K562 (cell line): ENCODE measurements at regions of chr22 and their contacts with region 1.

Region 1: GRCh38 chr22:22463855-22464540 is 44.5 kb downstream of the ZNF280B start:
- DNase-seq: peak; percentile 97 to 99 (median 99)
- ATAC-seq: peak; percentile 97
- H3K4me3 ChIP-seq: no peak overlapping the region
- H3K27ac ChIP-seq: no peak overlapping the region
- H3K4me1 ChIP-seq: peaks cover 0 to 2% of the 10 kb centered on the region in 2 experiments; a peak in 1 of 5 replicates
- H3K27me3 ChIP-seq: peaks cover 13 to 18% of the 10 kb centered on the region in 2 experiments; a peak in 4 of 5 replicates
- CTCF ChIP-seq: peak in 2 of 3 experiments; percentile 100; a peak in 4 of 6 replicates
- EP300 ChIP-seq: no peak; the same call in 1 of the 2 replicates
- POLR2A ChIP-seq: no peak
- RAD21 ChIP-seq: peak in 1 of 2 experiments; percentile 100; a peak in 2 of 4 replicates

Region 2: DNA sequence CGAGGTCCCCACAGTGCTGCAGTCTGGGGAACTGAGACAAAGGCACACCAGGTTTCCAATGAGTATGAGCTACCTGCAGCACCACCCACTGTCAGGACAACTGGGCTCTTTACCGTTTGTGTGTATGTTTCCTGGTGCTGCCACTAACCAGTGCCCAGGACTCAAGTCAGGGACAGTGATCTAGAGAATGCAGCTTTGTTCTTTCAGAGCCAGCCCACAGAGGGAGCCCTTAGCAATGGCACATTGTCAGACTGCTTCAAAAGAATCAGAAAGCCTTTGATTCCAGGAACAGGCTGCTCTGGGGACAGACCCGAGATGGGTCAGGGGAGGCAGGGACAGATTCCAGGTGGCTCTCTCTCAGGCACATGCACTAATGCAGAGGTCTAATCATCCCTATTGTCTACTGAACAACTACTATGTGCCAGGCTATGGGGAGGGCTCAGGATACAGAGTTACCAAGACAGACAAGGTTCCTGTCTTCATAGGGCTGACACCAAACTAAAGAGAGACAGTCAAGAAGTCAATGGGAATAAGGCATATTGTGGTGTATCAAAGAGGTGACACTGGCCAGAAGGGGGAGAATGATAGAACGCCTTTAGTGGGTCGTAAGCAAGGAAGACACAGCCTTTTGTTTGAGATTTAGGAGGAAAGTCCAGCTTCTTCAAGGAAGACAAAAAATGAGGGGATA is 115.7 kb before region 1 on chr22:
- CTCF ChIA-PET with region 1: no interaction called
- POLR2A ChIA-PET with region 1: no interaction called
- in situ Hi-C with region 1: no loop called
- intact Hi-C with region 1: no loop called
- DNase-seq: peak in 1 of 4 experiments; percentile 55
- ATAC-seq: peak; percentile 73
- H3K4me3 ChIP-seq: no peak overlapping the region
- H3K27ac ChIP-seq: no peak overlapping the region
- H3K4me1 ChIP-seq: no peaks in the 10 kb centered on the region
- H3K27me3 ChIP-seq: peaks cover 22 to 34% of the 10 kb centered on the region in 2 experiments
- CTCF ChIP-seq: peak in 2 of 3 experiments; percentile 68 to 75; a peak in 4 of 6 replicates
- EP300 ChIP-seq: no peak
- POLR2A ChIP-seq: no peak
- RAD21 ChIP-seq: no peak

Region 3: GRCh38 chr22:22380098-22381030 is 83.6 kb before region 1 on chr22:
- CTCF ChIA-PET with region 1: no interaction called
- POLR2A ChIA-PET with region 1: no interaction called
- in situ Hi-C with region 1: no loop called
- intact Hi-C with region 1: loop called (anchors 1 kb)
- DNase-seq: peak; percentile 80 to 91 (median 88)
- ATAC-seq: peak; percentile 87
- H3K4me3 ChIP-seq: no peak overlapping the region
- H3K27ac ChIP-seq: no peak overlapping the region
- H3K4me1 ChIP-seq: no peaks in the 10 kb centered on the region
- H3K27me3 ChIP-seq: peaks cover 14 to 33% of the 10 kb centered on the region in 2 experiments
- CTCF ChIP-seq: peak; percentile 78 to 87 (median 83)
- EP300 ChIP-seq: no peak
- POLR2A ChIP-seq: no peak
- RAD21 ChIP-seq: peak in 1 of 2 experiments; percentile 22; a peak in 1 of 4 replicates

Region 4: GRCh38 chr22:22479999-22480532 is 16.1 kb after region 1 on chr22:
- CTCF ChIA-PET with region 1: interaction called, 3 read pairs
- POLR2A ChIA-PET with region 1: interaction called, 13 read pairs
- in situ Hi-C with region 1: no loop called
- intact Hi-C with region 1: no loop called
- DNase-seq: peak in 2 of 4 experiments; percentile 14 to 33
- ATAC-seq: peak; percentile 52
- H3K4me3 ChIP-seq: no peak overlapping the region
- H3K27ac ChIP-seq: no peak overlapping the region
- H3K4me1 ChIP-seq: peaks cover 0 to 7% of the 10 kb centered on the region in 2 experiments; a peak in 2 of 5 replicates
- H3K27me3 ChIP-seq: no peaks in the 10 kb centered on the region; a peak in 1 of 5 replicates
- CTCF ChIP-seq: no peak
- EP300 ChIP-seq: no peak
- POLR2A ChIP-seq: no peak
- RAD21 ChIP-seq: no peak

Region 5: GRCh38 chr22:22576244-22576988 is 112.4 kb after region 1 on chr22:
- CTCF ChIA-PET with region 1: interaction called, 58 read pairs
- POLR2A ChIA-PET with region 1: interaction called, 6 read pairs
- in situ Hi-C with region 1: no loop called
- intact Hi-C with region 1: loop called (anchors 2 kb)
- DNase-seq: peak; percentile 96 to 98 (median 97)
- ATAC-seq: peak; percentile 96
- H3K4me3 ChIP-seq: no peak overlapping the region
- H3K27ac ChIP-seq: no peak overlapping the region
- H3K4me1 ChIP-seq: peaks cover 0 to 14% of the 10 kb centered on the region in 2 experiments; a peak in 3 of 5 replicates
- H3K27me3 ChIP-seq: peaks cover 48 to 60% of the 10 kb centered on the region in 2 experiments
- CTCF ChIP-seq: peak in 1 of 3 experiments; percentile 99; a peak in 2 of 6 replicates
- EP300 ChIP-seq: peak; percentile 75
- POLR2A ChIP-seq: no peak
- RAD21 ChIP-seq: peak in 1 of 2 experiments; percentile 89; a peak in 2 of 4 replicates

Region 6: GRCh38 chr22:22616636-22617035 is 152.6 kb after region 1 on chr22:
- CTCF ChIA-PET with region 1: interaction called, 21 read pairs
- POLR2A ChIA-PET with region 1: interaction called, 8 read pairs
- in situ Hi-C with region 1: no loop called
- intact Hi-C with region 1: loop called (anchors 1 kb)
- DNase-seq: peak in 1 of 4 experiments; percentile 40
- ATAC-seq: peak; percentile 1
- H3K4me3 ChIP-seq: no peak overlapping the region
- H3K27ac ChIP-seq: no peak overlapping the region
- H3K4me1 ChIP-seq: no peaks in the 10 kb centered on the region
- H3K27me3 ChIP-seq: peaks cover 52 to 64% of the 10 kb centered on the region in 2 experiments
- CTCF ChIP-seq: no peak
- EP300 ChIP-seq: no peak
- POLR2A ChIP-seq: no peak
- RAD21 ChIP-seq: no peak

Region 7: GRCh38 chr22:22720201-22720723 is 256.3 kb after region 1 on chr22:
- CTCF ChIA-PET with region 1: interaction called, 12 read pairs
- POLR2A ChIA-PET with region 1: no interaction called
- in situ Hi-C with region 1: no loop called
- intact Hi-C with region 1: loop called (anchors 1 kb)
- DNase-seq: peak; percentile 93 to 96 (median 94)
- ATAC-seq: peak; percentile 97
- H3K4me3 ChIP-seq: no peak overlapping the region
- H3K27ac ChIP-seq: no peak overlapping the region
- H3K4me1 ChIP-seq: peaks cover 0 to 25% of the 10 kb centered on the region in 2 experiments; a peak in 3 of 5 replicates
- H3K27me3 ChIP-seq: peaks cover 0 to 12% of the 10 kb centered on the region in 2 experiments; a peak in 2 of 5 replicates
- CTCF ChIP-seq: no peak
- EP300 ChIP-seq: no peak
- POLR2A ChIP-seq: no peak
- RAD21 ChIP-seq: no peak

Region 8: DNA sequence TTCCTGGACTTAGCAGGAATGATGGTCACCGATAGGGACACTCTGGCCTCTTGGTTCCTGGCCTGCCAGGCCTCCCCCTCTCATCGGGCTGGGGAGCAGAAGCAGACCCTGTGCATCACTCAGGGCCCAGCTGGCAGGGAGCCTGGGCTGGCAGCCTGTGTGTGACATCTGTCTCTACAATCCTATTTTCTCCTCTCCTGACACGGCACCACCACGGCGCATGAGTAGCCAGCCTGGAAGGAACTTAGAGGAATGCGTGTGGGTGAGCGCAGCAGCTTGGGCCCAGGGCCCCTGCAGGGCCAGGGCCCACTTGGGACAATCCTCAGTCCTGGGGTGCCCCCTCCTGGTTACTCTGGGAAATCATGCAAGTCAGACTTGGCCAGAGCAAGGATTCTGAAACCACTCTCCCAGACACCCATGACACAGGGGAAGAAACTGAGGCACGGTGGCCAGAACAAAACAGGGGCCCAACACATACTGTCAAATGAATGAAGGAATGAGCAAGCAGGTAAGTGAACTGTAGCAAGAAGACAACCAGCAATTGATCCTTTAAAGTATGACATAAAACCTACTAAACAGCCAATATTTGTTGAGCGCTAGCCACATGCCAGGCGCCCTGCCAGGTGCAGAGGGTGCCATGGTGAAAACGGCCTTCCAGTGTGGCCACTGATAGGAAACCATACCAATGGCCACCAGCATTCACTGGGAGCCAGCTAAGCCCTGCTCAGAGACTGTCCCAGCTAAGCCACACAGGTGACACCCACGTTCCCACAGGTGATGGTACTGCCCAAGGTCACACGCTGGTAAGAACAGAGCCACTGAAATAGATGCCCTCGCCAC is 664.5 kb after region 1 on chr22:
- CTCF ChIA-PET with region 1: interaction called, 3 read pairs
- POLR2A ChIA-PET with region 1: no interaction called
- in situ Hi-C with region 1: no loop called
- intact Hi-C with region 1: loop called (anchors 10 kb)
- DNase-seq: peak; percentile 61 to 98 (median 62)
- ATAC-seq: peak; percentile 91
- H3K4me3 ChIP-seq: no peak overlapping the region
- H3K27ac ChIP-seq: no peak overlapping the region
- H3K4me1 ChIP-seq: peaks cover 0 to 9% of the 10 kb centered on the region in 2 experiments; a peak in 2 of 5 replicates
- H3K27me3 ChIP-seq: peaks cover 53 to 79% of the 10 kb centered on the region in 2 experiments
- CTCF ChIP-seq: peak in 1 of 3 experiments; percentile 100; a peak in 2 of 6 replicates
- EP300 ChIP-seq: peak; percentile 83
- POLR2A ChIP-seq: no peak
- RAD21 ChIP-seq: peak in 1 of 2 experiments; percentile 100; a peak in 2 of 4 replicates